RWPE1 (cell line): ENCODE measurements at regions of chr5 and their contacts with region 1.

Region 1: DNA sequence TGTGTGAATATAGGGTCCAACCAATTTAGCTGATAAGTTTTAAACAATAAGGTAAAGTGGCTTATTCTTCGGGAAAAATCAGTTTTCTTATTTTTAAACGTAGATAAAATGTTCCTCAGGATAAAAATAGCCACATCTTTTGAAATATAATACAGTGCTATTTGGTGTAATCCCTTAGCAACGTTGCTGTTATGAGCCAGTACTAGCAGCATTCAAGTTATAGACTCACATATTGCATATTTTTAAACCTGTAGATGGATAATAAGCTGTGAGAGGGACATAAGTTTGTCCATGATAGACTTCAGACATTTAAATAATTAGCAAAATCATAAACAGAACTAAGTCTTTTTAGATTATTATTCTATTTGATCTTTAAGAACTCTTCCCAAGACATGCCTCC is 6.3 kb downstream of the PDE4D start:
- DNase-seq: no peak
- H3K27ac ChIP-seq: no peak overlapping the region
- CTCF ChIP-seq: no peak

Region 2: DNA sequence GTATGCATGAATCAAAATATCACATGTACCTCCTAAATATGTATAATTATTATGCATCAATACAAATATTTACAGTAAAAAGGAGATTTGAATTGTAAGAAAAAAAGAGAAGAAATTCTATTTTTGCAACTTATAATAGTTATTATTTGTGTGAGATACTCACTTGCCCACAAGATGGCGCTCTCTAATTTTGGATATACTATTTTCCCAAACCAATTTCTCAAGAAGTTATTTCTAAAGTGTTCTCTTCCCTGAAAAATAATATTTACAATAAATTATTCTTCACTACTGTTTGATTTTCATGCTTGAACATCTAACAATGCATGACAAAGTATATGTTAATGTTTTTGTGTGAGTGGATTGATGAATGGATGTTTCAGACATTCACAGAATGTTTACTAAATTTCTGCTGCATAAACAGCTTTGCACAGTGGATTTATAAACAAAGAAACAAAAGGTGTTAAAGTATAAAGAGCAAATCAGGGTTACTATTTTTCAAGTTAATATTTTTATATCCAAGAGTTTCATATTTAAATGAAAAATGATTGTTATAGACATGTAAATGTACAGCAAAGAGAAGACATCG is 497.1 kb before region 1 on chr5:
- CTCF ChIA-PET with region 1: no interaction called
- POLR2A ChIA-PET with region 1: no interaction called
- DNase-seq: no peak
- H3K27ac ChIP-seq: no peak overlapping the region
- CTCF ChIP-seq: peak; percentile 84

Region 3: GRCh38 chr5:59799668-59800346 is 87.5 kb before region 1 on chr5:
- CTCF ChIA-PET with region 1: no interaction called
- POLR2A ChIA-PET with region 1: no interaction called
- DNase-seq: peak; percentile 54
- H3K27ac ChIP-seq: no peak overlapping the region
- CTCF ChIP-seq: peak; percentile 79

Region 4: GRCh38 chr5:59873113-59873512 is 14.2 kb before region 1 on chr5:
- CTCF ChIA-PET with region 1: interaction called, 10 read pairs
- POLR2A ChIA-PET with region 1: no interaction called
- DNase-seq: no peak
- H3K27ac ChIP-seq: no peak overlapping the region
- CTCF ChIP-seq: no peak